MCF 10A (cell line): ENCODE measurements at regions of chr10 and their contacts with region 1.

Region 1: GRCh38 chr10:28381903-28382347 is 79.1 kb upstream of the MPP7 start:
- DNase-seq: peak; percentile 84
- H3K4me3 Mint-ChIP-seq: no peak overlapping the region
- H3K27ac Mint-ChIP-seq: no peak overlapping the region
- H3K4me1 Mint-ChIP-seq: peaks cover 20% of the 10 kb centered on the region
- H3K27me3 Mint-ChIP-seq: no peaks in the 10 kb centered on the region
- CTCF ChIP-seq: peak; percentile 79

Region 2: DNA sequence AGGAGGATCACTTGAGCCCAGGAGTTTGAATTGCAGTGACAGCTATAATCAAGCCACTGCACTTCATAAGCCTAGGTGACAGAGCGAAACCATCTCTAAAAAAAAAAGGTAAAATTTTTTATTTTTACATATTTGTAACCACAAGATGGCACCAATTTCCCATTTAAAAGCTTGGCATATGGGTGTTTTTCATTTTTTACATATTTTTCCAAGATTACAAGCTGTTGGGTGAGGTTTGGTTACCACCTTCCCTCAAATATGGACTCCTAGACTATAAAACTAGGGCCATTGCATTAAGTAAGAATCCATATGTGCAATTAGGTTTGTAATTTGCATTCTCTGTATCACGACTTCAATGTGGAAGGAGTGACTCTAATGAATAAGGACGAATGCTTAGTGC is 1012.0 kb before region 1 on chr10:
- CTCF ChIA-PET with region 1: no interaction called
- POLR2A ChIA-PET with region 1: no interaction called
- intact Hi-C with region 1: loop called (anchors 10 kb)
- DNase-seq: peak; percentile 24
- H3K4me3 Mint-ChIP-seq: no peak overlapping the region
- H3K27ac Mint-ChIP-seq: no peak overlapping the region
- H3K4me1 Mint-ChIP-seq: peaks cover 22% of the 10 kb centered on the region
- H3K27me3 Mint-ChIP-seq: no peaks in the 10 kb centered on the region
- CTCF ChIP-seq: peak; percentile 40

Region 3: GRCh38 chr10:27805180-27805579 is 576.7 kb before region 1 on chr10:
- CTCF ChIA-PET with region 1: no interaction called
- POLR2A ChIA-PET with region 1: no interaction called
- intact Hi-C with region 1: no loop called
- DNase-seq: no peak
- H3K4me3 Mint-ChIP-seq: no peak overlapping the region
- H3K27ac Mint-ChIP-seq: no peak overlapping the region
- H3K4me1 Mint-ChIP-seq: no peaks in the 10 kb centered on the region
- H3K27me3 Mint-ChIP-seq: no peaks in the 10 kb centered on the region
- CTCF ChIP-seq: no peak

Region 4: DNA sequence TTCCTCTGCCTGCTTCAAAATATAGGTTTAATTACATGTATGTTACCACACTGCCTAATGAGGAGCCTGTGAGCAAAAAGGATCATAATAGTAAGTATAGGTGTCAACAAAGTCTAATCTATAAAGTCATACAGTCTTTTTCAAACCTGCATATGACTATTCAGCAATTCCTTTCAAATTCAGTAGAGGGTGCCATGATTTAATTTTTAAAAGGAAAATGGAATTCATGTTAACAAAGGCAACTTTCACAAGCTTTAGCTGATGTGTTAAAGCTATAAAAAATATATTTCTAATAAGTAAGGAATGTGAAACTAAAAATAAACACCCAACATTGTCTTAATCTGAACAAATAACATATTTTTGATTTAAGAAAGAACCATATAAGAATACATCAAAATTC is 131.1 kb before region 1 on chr10:
- CTCF ChIA-PET with region 1: interaction called, 154 read pairs
- POLR2A ChIA-PET with region 1: interaction called, 20 read pairs
- intact Hi-C with region 1: loop called (anchors 1 kb)
- DNase-seq: peak; percentile 28
- H3K4me3 Mint-ChIP-seq: no peak overlapping the region
- H3K27ac Mint-ChIP-seq: no peak overlapping the region
- H3K4me1 Mint-ChIP-seq: peaks cover 17% of the 10 kb centered on the region
- H3K27me3 Mint-ChIP-seq: no peaks in the 10 kb centered on the region
- CTCF ChIP-seq: peak; percentile 60

Region 5: DNA sequence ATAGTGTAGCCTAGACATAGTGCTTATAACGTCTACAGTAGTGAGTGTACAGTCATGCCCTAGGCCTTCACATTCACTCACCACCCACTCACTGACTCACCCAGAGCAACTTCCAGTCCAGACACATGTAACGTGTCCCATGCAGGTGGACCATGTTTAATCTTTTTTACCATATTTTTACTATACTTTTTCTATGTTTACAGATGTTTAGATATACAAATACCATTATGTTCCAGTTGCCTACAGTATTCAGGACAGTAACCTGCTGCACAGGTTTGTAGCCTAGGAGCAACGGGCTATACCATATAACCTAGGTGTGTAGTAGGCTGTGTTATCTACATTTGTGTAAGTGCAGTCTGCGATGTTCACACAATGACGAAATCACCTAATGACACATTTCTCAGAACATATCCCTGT is 90.0 kb before region 1 on chr10:
- CTCF ChIA-PET with region 1: interaction called, 13 read pairs
- POLR2A ChIA-PET with region 1: interaction called, 6 read pairs
- intact Hi-C with region 1: no loop called
- DNase-seq: peak; percentile 82
- H3K4me3 Mint-ChIP-seq: no peak overlapping the region
- H3K27ac Mint-ChIP-seq: peak overlapping the region; percentile 79
- H3K4me1 Mint-ChIP-seq: peaks cover 18% of the 10 kb centered on the region
- H3K27me3 Mint-ChIP-seq: no peaks in the 10 kb centered on the region
- CTCF ChIP-seq: no peak

Region 6: GRCh38 chr10:28393966-28394568 is 12.1 kb after region 1 on chr10:
- CTCF ChIA-PET with region 1: interaction called, 48 read pairs
- POLR2A ChIA-PET with region 1: interaction called, 16 read pairs
- intact Hi-C with region 1: no loop called
- DNase-seq: peak; percentile 76
- H3K4me3 Mint-ChIP-seq: no peak overlapping the region
- H3K27ac Mint-ChIP-seq: no peak overlapping the region
- H3K4me1 Mint-ChIP-seq: peaks cover 5% of the 10 kb centered on the region
- H3K27me3 Mint-ChIP-seq: no peaks in the 10 kb centered on the region
- CTCF ChIP-seq: peak; percentile 86

Region 7: GRCh38 chr10:28616514-28616913 is 234.6 kb after region 1 on chr10:
- CTCF ChIA-PET with region 1: no interaction called
- POLR2A ChIA-PET with region 1: no interaction called
- intact Hi-C with region 1: no loop called
- DNase-seq: no peak
- H3K4me3 Mint-ChIP-seq: no peak overlapping the region
- H3K27ac Mint-ChIP-seq: no peak overlapping the region
- H3K4me1 Mint-ChIP-seq: peaks cover 4% of the 10 kb centered on the region
- H3K27me3 Mint-ChIP-seq: no peaks in the 10 kb centered on the region
- CTCF ChIP-seq: no peak

Region 8: GRCh38 chr10:28628184-28628893 is 246.4 kb after region 1 on chr10:
- CTCF ChIA-PET with region 1: no interaction called
- POLR2A ChIA-PET with region 1: no interaction called
- intact Hi-C with region 1: no loop called
- DNase-seq: peak; percentile 84
- H3K4me3 Mint-ChIP-seq: no peak overlapping the region
- H3K27ac Mint-ChIP-seq: no peak overlapping the region
- H3K4me1 Mint-ChIP-seq: peaks cover 15% of the 10 kb centered on the region
- H3K27me3 Mint-ChIP-seq: no peaks in the 10 kb centered on the region
- CTCF ChIP-seq: peak; percentile 80